ENCODE measurements at regions of chr6 and their contacts with region 1.

Region 1: DNA sequence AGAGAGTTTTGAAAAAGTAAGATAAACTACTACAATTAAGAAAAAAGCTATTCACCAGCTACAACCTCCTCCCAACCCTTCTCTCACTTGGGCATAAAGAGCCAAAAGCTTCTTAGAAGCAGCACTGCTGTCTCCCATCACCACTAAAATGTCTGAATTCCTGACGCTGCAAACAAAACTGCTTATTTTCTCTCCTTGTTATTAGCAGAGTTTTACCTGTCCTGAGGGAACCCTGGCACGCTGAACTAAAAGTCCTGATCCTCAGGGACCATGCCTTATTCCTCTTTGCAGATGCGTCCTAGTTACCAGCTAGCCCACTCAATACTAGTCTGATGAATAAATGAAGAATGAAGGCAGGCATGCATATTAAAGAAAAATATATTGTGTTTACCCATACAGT is 1.1 kb downstream of the HACE1 start:
- DNase-seq: no peak
- H3K4me3 ChIP-seq: peak overlapping the region; percentile 80
- H3K27ac ChIP-seq: peak overlapping the region; percentile 76
- H3K4me1 ChIP-seq: peaks cover 7% of the 10 kb centered on the region
- H3K27me3 ChIP-seq: no peaks in the 10 kb centered on the region
- CTCF ChIP-seq: no peak

Region 2: DNA sequence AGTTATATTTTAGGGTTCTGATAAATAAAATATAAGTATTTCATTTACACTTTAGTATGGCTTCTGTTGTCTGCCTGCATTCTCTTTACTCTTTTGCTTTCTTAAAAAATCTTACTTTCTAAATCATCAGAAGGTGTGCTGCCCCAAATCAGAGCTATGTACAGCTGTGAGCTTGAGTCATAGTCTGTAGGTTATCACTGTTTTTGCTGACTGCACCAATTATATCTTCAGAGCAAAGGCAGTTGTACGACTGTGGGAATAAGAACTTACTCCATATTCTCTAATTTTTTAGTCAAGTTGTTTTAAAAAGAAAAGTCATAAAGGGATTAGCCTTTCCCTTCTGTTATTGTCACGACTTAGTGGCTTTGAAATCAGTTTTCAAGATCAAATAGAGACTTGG is 1648.0 kb before region 1 on chr6:
- CTCF ChIA-PET with region 1: no interaction called
- POLR2A ChIA-PET with region 1: no interaction called
- intact Hi-C with region 1: no loop called
- DNase-seq: no peak
- H3K4me3 ChIP-seq: no peak overlapping the region
- H3K27ac ChIP-seq: no peak overlapping the region
- H3K4me1 ChIP-seq: no peaks in the 10 kb centered on the region
- H3K27me3 ChIP-seq: no peaks in the 10 kb centered on the region
- CTCF ChIP-seq: no peak

Region 3: DNA sequence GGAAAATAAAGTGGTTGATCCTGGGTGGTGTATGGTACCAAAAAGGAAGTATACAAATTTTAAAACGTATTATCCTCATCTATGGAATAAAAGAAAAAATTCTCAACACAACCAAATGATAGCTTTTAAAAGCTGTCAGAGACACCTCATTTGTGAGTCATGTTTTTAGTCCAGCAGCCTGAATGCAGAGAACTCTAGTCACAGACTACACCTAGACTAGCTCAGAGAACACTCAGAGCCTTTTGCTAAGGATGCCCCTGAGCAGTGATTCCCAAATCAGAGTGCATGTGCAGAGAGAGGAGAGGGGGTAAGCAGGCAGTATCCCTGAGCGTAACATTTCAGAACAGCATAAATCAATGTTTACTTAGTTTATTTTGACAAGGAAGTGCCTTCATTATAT is 808.2 kb before region 1 on chr6:
- CTCF ChIA-PET with region 1: no interaction called
- POLR2A ChIA-PET with region 1: no interaction called
- intact Hi-C with region 1: no loop called
- DNase-seq: peak; percentile 16
- H3K4me3 ChIP-seq: no peak overlapping the region
- H3K27ac ChIP-seq: no peak overlapping the region
- H3K4me1 ChIP-seq: peaks cover 17% of the 10 kb centered on the region
- H3K27me3 ChIP-seq: no peaks in the 10 kb centered on the region
- CTCF ChIP-seq: no peak

Region 4: GRCh38 chr6:104843200-104843599 is 15.4 kb before region 1 on chr6:
- CTCF ChIA-PET with region 1: no interaction called
- POLR2A ChIA-PET with region 1: interaction called, 10 read pairs
- intact Hi-C with region 1: no loop called
- DNase-seq: no peak
- H3K4me3 ChIP-seq: no peak overlapping the region
- H3K27ac ChIP-seq: no peak overlapping the region
- H3K4me1 ChIP-seq: no peaks in the 10 kb centered on the region
- H3K27me3 ChIP-seq: no peaks in the 10 kb centered on the region
- CTCF ChIP-seq: no peak

Region 5: DNA sequence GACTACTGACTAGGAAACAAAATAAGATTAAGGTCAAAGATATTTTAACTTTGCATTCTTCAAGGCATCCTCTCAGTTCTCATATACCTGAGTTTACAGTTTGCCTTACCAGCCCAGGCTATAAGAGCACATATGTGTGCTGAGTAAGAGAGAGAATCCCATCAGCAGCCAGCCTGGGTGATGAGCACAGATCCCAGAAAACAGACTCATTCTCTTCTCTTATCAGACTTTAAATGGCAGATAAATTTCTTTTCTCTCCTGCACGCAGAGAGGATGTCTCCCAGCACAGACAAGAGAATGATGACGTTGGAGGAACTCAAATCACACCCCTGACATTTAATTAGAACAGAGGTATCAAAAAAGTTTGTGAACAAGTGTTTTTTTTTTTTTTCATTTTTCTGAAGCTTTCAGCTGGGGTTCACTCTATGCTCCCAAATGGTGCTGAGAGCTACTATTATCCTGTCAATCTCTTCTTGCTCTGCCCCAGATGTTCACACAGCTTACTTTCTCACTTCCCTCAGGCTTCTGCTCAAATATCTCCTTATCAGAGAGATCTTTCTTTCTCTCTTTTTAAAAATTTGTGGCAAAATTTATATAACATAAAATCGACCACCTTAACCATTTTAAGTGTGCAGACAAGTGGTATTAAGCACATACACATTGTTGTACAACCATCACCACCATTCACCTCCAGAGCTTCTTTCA is 23.5 kb after region 1 on chr6:
- CTCF ChIA-PET with region 1: no interaction called
- POLR2A ChIA-PET with region 1: no interaction called
- intact Hi-C with region 1: no loop called
- DNase-seq: no peak
- H3K4me3 ChIP-seq: no peak overlapping the region
- H3K27ac ChIP-seq: no peak overlapping the region
- H3K4me1 ChIP-seq: no peaks in the 10 kb centered on the region
- H3K27me3 ChIP-seq: no peaks in the 10 kb centered on the region
- CTCF ChIP-seq: no peak

Region 6: GRCh38 chr6:105302617-105303128 is 444.0 kb after region 1 on chr6:
- CTCF ChIA-PET with region 1: no interaction called
- POLR2A ChIA-PET with region 1: interaction called, 11 read pairs
- intact Hi-C with region 1: no loop called
- DNase-seq: no peak
- H3K4me3 ChIP-seq: no peak overlapping the region
- H3K27ac ChIP-seq: no peak overlapping the region
- H3K4me1 ChIP-seq: peaks cover 11% of the 10 kb centered on the region
- H3K27me3 ChIP-seq: no peaks in the 10 kb centered on the region
- CTCF ChIP-seq: no peak